ENCODE measurements at regions of chr6 and their contacts with region 1.

Region 1: GRCh38 chr6:119742188-119742803 is 392.7 kb upstream of the MAN1A1 start:
- DNase-seq: peak; percentile 63
- H3K4me3 Mint-ChIP-seq: no peak overlapping the region
- H3K27ac Mint-ChIP-seq: no peak overlapping the region
- H3K4me1 Mint-ChIP-seq: no peaks in the 10 kb centered on the region
- H3K27me3 Mint-ChIP-seq: no peaks in the 10 kb centered on the region
- CTCF ChIP-seq: peak; percentile 80

Region 2: DNA sequence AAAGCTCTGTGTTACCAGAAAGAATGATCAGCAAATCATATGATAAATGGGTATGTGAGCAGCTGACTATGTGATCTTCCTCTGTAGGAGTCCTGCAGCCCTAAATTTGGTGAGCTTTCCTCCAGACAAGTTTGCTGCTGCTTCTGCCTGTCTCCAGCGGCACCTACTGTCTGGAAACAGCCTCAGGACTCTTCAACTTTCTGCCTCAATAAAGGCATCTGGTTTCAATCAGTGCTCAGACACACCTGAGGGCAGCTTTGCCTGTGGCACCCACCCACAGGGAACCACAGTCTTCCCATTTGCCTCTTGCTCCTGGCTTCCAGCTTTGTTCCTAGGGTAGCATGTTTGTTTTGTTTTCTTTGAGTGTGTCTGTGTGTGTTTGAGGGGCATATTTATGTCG is 335.2 kb after region 1 on chr6:
- CTCF ChIA-PET with region 1: interaction called, 38 read pairs
- POLR2A ChIA-PET with region 1: no interaction called
- intact Hi-C with region 1: loop called (anchors 1 kb)
- DNase-seq: peak; percentile 55
- H3K4me3 Mint-ChIP-seq: no peak overlapping the region
- H3K27ac Mint-ChIP-seq: no peak overlapping the region
- H3K4me1 Mint-ChIP-seq: peaks cover 5% of the 10 kb centered on the region
- H3K27me3 Mint-ChIP-seq: no peaks in the 10 kb centered on the region
- CTCF ChIP-seq: peak; percentile 30

Region 3: GRCh38 chr6:120378582-120379220 is 636.4 kb after region 1 on chr6:
- CTCF ChIA-PET with region 1: no interaction called
- POLR2A ChIA-PET with region 1: no interaction called
- intact Hi-C with region 1: loop called (anchors 1 kb)
- DNase-seq: peak; percentile 61
- H3K4me3 Mint-ChIP-seq: no peak overlapping the region
- H3K27ac Mint-ChIP-seq: no peak overlapping the region
- H3K4me1 Mint-ChIP-seq: no peaks in the 10 kb centered on the region
- H3K27me3 Mint-ChIP-seq: peaks cover 1% of the 10 kb centered on the region
- CTCF ChIP-seq: peak; percentile 50

Region 4: GRCh38 chr6:120473804-120474203 is 731.5 kb after region 1 on chr6:
- CTCF ChIA-PET with region 1: no interaction called
- POLR2A ChIA-PET with region 1: no interaction called
- intact Hi-C with region 1: no loop called
- DNase-seq: no peak
- H3K4me3 Mint-ChIP-seq: no peak overlapping the region
- H3K27ac Mint-ChIP-seq: no peak overlapping the region
- H3K4me1 Mint-ChIP-seq: no peaks in the 10 kb centered on the region
- H3K27me3 Mint-ChIP-seq: no peaks in the 10 kb centered on the region
- CTCF ChIP-seq: no peak